HepG2 (cell line): ENCODE measurements at regions of chr1 and their contacts with region 1.

Region 1: GRCh38 chr1:24142546-24143534 is at the start of gene IL22RA1:
- DNase-seq: peak; percentile 48
- ATAC-seq: peak; percentile 86
- H3K4me3 ChIP-seq: peak within 1 kb of the TSS; percentile 62 to 82 (median 68)
- H3K27ac ChIP-seq: peak within 1 kb of the TSS; percentile 34
- H3K4me1 ChIP-seq: peaks cover 45% of the 10 kb centered on the region
- H3K27me3 ChIP-seq: no peaks in the 10 kb centered on the region; a peak in 1 of 5 replicates
- CTCF ChIP-seq: no peak
- EP300 ChIP-seq: no peak
- POLR2A ChIP-seq: peak; percentile 48 to 82; a peak in 3 of 4 replicates
- RAD21 ChIP-seq: no peak
- total RNA-seq, gene IL22RA1: 2.1 and 4.4 TPM in 2 replicates

Region 2: DNA sequence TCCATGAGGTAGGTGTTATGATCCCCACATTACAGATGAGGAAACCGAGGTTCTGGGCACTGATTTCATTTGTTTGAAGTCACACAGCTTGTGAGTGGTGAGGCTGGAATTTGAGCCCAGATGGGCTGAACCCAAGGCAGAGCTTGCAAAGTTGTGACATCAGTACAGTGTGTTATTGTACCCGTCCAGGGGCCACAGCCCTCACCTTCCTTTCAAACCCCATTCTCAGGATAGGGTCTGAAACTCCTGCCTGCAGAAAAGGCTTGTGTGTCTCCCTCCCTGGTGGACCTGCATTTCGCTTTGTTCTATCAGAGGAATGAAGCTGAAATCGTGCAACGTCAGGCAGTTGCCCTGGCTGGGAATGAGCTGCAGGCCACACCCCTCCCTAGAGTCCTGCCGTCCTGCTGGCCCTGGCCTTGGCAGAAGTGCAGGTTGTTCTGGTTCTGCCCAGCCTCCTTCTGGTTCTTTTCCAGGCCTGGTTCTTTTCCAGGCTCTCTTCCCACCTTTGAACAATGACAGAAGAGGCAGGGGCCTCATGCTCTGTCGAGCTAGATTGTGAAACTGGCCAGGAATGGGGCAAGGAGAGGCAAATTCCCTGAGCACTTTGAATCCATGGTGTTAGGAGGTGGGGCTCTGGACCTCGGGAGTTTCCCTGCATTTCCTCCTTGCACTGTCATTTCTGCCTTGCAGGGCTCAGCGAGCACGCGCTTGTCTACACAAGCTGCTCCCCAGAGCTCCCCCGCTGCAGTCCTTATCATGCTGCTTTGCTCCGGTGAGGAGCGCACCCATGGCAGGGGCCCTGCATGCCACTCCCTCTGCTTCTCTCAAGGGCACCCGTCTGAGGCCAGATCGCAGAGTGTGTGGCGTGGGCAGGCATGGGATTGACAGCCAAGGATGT is 22.7 kb before region 1 on chr1:
- CTCF ChIA-PET with region 1: no interaction called
- POLR2A ChIA-PET with region 1: interaction called, 24 read pairs
- in situ Hi-C with region 1: no loop called
- intact Hi-C with region 1: no loop called
- DNase-seq: peak; percentile 85
- ATAC-seq: peak; percentile 77
- H3K4me3 ChIP-seq: peak overlapping the region in 2 of 3 experiments; percentile 0 to 36; a peak in 3 of 6 replicates
- H3K27ac ChIP-seq: peak overlapping the region; percentile 79
- H3K4me1 ChIP-seq: peaks cover 64% of the 10 kb centered on the region
- H3K27me3 ChIP-seq: no peaks in the 10 kb centered on the region
- CTCF ChIP-seq: no peak
- EP300 ChIP-seq: peak in 1 of 2 experiments; percentile 41; a peak in 1 of 4 replicates
- POLR2A ChIP-seq: peak; percentile 36 to 59; a peak in 3 of 4 replicates
- RAD21 ChIP-seq: no peak